ENCODE measurements at regions of chr17 and their contacts with region 1.

Region 1: GRCh38 chr17:42819944-42820535 is 4.0 kb downstream of the BECN1 start:
- DNase-seq: peak; percentile 79
- ATAC-seq: no peak
- H3K4me3 Mint-ChIP-seq: no peak overlapping the region
- H3K27ac Mint-ChIP-seq: peak overlapping the region; percentile 3
- H3K4me1 Mint-ChIP-seq: peaks cover 28% of the 10 kb centered on the region
- H3K27me3 Mint-ChIP-seq: peaks cover under 1% of the 10 kb centered on the region

Region 2: GRCh38 chr17:42773290-42774035 is 46.6 kb before region 1 on chr17 and contains the start of gene VPS25:
- CTCF ChIA-PET with region 1: interaction called, 11 read pairs
- POLR2A ChIA-PET with region 1: interaction called, 5 read pairs
- DNase-seq: peak; percentile 82
- ATAC-seq: peak; percentile 97
- H3K4me3 Mint-ChIP-seq: peak within 1 kb of the TSS; percentile 99
- H3K27ac Mint-ChIP-seq: peak within 1 kb of the TSS; percentile 99
- H3K4me1 Mint-ChIP-seq: peaks cover 34% of the 10 kb centered on the region
- H3K27me3 Mint-ChIP-seq: peaks cover 2% of the 10 kb centered on the region
- total RNA-seq, gene VPS25: 67.8 to 70.5 TPM

Region 3: GRCh38 chr17:42798383-42799380 is 21.4 kb before region 1 on chr17 and contains the starts of genes CNTD1 and COA3:
- CTCF ChIA-PET with region 1: interaction called, 11 read pairs
- POLR2A ChIA-PET with region 1: interaction called, 6 read pairs
- DNase-seq: peak; percentile 88
- ATAC-seq: peak; percentile 99
- H3K4me3 Mint-ChIP-seq: peak within 1 kb of the TSS; percentile 94
- H3K27ac Mint-ChIP-seq: peak within 1 kb of the TSS; percentile 77
- H3K4me1 Mint-ChIP-seq: peaks cover 18% of the 10 kb centered on the region
- H3K27me3 Mint-ChIP-seq: peaks cover 5% of the 10 kb centered on the region
- total RNA-seq, gene CNTD1: not detected
- total RNA-seq, gene COA3: 41.4 to 41.5 TPM

Region 4: GRCh38 chr17:42832974-42833766 is 13.1 kb after region 1 on chr17 and contains the start of gene PSME3:
- CTCF ChIA-PET with region 1: interaction called, 42 read pairs
- POLR2A ChIA-PET with region 1: interaction called, 72 read pairs
- DNase-seq: peak; percentile 92
- ATAC-seq: peak; percentile 94
- H3K4me3 Mint-ChIP-seq: peak within 1 kb of the TSS; percentile 94
- H3K27ac Mint-ChIP-seq: peak within 1 kb of the TSS; percentile 100
- H3K4me1 Mint-ChIP-seq: peaks cover 25% of the 10 kb centered on the region
- H3K27me3 Mint-ChIP-seq: no peaks in the 10 kb centered on the region
- total RNA-seq, gene PSME3: 141 to 145 TPM

Region 5: DNA sequence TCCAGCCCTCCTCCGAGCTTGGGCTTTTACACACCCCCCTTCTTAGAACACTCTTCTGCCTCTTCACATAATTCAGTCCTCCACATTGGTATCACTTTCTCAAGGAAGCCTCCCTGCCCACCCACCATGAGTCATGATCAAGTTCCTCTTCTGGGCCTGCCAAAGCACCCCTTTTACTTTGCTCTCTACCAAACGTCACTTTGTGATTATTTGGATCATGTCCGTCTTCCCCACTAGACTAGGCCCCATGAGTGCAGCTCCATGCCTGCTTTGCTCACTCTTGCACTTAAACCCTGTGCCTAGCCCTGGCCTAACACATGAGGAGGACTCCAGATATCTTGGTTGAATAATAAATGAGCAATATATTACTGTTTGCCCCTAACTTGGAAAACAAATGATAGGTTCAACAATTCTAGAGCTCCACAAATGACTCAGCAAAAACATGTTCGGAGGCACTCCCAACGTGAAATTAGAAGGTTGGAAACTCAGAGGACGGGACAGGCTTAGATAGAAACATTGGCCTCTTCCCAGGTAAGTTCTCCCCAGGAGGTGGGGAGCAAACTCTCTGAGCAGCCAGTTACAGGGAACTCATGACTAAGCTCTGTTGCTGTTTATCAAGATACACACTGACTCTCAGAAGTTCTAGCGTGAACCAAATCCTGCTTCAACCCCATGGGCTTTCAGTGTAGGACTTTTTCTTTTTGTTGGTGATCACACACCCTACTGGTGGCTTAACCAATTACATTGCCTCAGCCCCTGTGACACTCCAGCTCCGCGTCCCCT is 108.9 kb after region 1 on chr17:
- CTCF ChIA-PET with region 1: interaction called, 21 read pairs
- POLR2A ChIA-PET with region 1: interaction called, 5 read pairs
- DNase-seq: peak; percentile 46
- ATAC-seq: peak; percentile 87
- H3K4me3 Mint-ChIP-seq: no peak overlapping the region
- H3K27ac Mint-ChIP-seq: no peak overlapping the region
- H3K4me1 Mint-ChIP-seq: peaks cover 12% of the 10 kb centered on the region
- H3K27me3 Mint-ChIP-seq: peaks cover 3% of the 10 kb centered on the region